Esophagus squamous epithelium (tissue), 5 donors: ENCODE measurements at regions of chr2 and their contacts with region 1.

Region 1: DNA sequence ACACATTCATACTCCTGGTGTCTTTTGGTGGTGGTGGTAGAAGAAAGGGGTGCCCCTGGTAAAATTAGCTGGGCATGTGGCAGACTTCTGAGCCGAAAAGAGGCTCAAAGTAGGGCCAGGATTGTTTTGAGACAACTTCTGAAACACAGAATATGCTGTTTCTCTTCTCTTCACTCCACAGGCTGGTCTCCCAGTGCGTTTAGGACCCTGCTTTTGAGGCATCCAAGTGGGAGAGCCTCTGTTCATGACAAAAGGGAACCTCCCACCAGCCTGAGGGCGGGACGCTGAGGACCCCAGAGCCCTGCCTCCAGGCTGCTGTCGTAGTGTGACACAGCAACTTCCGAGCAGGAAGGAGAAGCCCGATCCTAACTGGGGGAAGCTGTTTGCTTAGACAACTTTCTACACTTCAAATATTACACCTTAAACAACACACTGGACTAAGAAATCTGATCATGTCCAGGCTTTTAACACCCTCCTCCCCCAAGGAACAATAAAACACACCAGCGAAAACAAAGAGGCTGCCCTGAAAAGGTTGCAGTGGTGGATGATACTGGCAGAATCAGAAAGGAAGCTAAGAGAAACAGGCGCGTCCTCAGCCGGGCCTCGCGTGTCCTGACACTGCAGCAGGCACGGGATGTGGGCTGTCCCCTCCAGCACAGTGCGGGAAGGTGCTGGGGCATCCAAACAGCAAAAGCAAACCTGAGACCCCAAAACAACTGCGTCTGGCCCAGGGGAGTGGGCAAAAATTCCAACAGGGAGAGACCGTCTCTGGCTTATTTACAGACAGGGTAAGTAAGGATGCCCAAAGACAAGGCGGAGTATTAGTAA is 9.3 kb downstream of the SERTAD2 start:
- DNase-seq: peak; percentile 22
- H3K4me3 ChIP-seq: peak overlapping the region; percentile 24 to 66 (median 48)
- H3K27ac ChIP-seq: peak overlapping the region; percentile 86 to 100 (median 94)
- H3K4me1 ChIP-seq: peaks cover 34 to 100% (median 60%) of the 10 kb centered on the region in 3 donors
- H3K27me3 ChIP-seq: no peaks in the 10 kb centered on the region
- CTCF ChIP-seq: no peak
- POLR2A ChIP-seq: peak in 2 of 4 donors; percentile 71 to 87

Region 2: DNA sequence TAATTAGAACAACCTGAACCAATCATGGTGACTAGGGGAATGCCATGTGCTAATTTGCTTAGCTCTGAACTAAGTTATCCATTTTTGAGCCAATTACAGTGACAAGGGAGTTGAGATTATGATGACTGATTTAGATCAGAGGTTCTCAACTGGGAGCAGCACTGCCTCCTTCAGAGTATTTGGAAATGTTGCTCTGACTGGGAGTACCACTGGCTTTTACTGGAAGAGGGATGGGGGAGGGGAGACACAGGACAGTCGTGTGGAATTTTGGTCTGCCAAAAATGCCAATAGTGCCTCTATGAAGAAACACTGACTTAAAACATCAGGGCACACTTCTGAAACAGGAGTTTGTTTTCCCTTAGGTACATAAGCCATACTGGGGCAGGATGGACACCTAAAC is 577.1 kb before region 1 on chr2:
- intact Hi-C with region 1: no loop called
- DNase-seq: no peak
- H3K4me3 ChIP-seq: no peak overlapping the region
- H3K27ac ChIP-seq: no peak overlapping the region
- H3K4me1 ChIP-seq: peaks cover 18 to 54% (median 25%) of the 10 kb centered on the region in 3 donors
- H3K27me3 ChIP-seq: no peaks in the 10 kb centered on the region
- CTCF ChIP-seq: no peak
- POLR2A ChIP-seq: no peak

Region 3: GRCh38 chr2:64586883-64587481 is 57.4 kb before region 1 on chr2:
- intact Hi-C with region 1: loop called (anchors 10 kb)
- DNase-seq: no peak
- H3K4me3 ChIP-seq: no peak overlapping the region
- H3K27ac ChIP-seq: peak overlapping the region in 1 of 4 donors; percentile 45
- H3K4me1 ChIP-seq: peaks cover 0 to 26% (median 4%) of the 10 kb centered on the region in 3 donors
- H3K27me3 ChIP-seq: no peaks in the 10 kb centered on the region
- CTCF ChIP-seq: peak; percentile 30 to 74 (median 48)
- POLR2A ChIP-seq: no peak